Activated CD4-positive, alpha-beta T cell treated with anti-CD3 and anti-CD28 coated beads, Interleukin-2, amount 10 ng/mL, durations not matched to agents 24 days and 14 days (primary cell): ENCODE measurements at regions of chr16 and their contacts with region 1.

Region 1: DNA sequence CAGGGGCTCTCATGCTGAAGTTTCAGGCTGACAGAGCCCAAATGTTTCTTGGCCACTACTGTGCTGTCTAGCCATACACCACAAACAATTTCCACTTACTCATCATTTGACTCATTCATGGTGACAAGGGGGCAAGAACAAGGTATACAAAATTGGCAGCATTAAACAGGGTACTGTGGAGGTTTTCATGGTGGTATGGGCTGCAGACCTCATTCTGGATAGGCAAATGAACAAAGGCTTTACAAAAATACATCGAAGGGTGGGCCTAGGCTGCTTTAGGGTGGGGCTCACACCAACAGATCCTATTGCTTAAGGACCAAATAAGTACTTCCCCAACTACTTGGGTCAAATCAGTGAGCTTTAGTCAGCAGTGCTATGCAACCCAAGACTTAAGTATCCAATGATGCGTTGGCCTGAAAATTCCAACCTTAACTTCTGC is 53.0 kb downstream of the N4BP1 start:
- DNase-seq: peak; percentile 72
- H3K4me3 Mint-ChIP-seq: peak overlapping the region; percentile 55
- H3K27ac Mint-ChIP-seq: peak overlapping the region; percentile 86
- H3K4me1 Mint-ChIP-seq: peaks cover 72% of the 10 kb centered on the region
- H3K27me3 Mint-ChIP-seq: no peaks in the 10 kb centered on the region

Region 2: GRCh38 chr16:46822270-46822669 is 1734.7 kb before region 1 on chr16:
- intact Hi-C with region 1: loop called (anchors 5 kb)
- DNase-seq: peak; percentile 65
- H3K4me3 Mint-ChIP-seq: no peak overlapping the region
- H3K27ac Mint-ChIP-seq: no peak overlapping the region
- H3K4me1 Mint-ChIP-seq: peaks cover 26% of the 10 kb centered on the region
- H3K27me3 Mint-ChIP-seq: no peaks in the 10 kb centered on the region

Region 3: GRCh38 chr16:48459167-48459566 is 97.8 kb before region 1 on chr16:
- intact Hi-C with region 1: loop called (anchors 5 kb)
- DNase-seq: no peak
- H3K4me3 Mint-ChIP-seq: no peak overlapping the region
- H3K27ac Mint-ChIP-seq: peak overlapping the region; percentile 22
- H3K4me1 Mint-ChIP-seq: peaks cover 12% of the 10 kb centered on the region
- H3K27me3 Mint-ChIP-seq: peaks cover 24% of the 10 kb centered on the region

Region 4: DNA sequence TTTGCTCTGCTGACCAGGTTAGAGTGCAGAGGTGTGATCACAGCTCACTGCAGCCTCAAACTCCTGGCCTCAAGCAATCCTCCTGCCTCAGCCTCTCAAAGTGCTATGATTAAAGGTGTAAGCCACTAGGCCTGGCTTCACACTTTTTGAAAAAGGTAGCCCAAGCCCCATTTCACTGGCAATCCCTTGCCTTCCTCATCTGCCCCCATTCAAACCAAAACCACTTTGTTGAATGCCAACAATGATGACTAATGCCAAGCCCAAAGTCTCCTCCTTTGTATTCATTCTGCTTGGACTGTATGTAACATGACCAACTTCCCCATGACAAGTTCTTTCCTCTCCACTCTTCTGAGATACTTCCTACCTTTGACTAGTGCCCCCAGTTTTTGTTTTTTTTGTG is 20.0 kb after region 1 on chr16:
- intact Hi-C with region 1: loop called (anchors 2 kb)
- DNase-seq: no peak
- H3K4me3 Mint-ChIP-seq: peak overlapping the region; percentile 16
- H3K27ac Mint-ChIP-seq: peak overlapping the region; percentile 81
- H3K4me1 Mint-ChIP-seq: peaks cover 39% of the 10 kb centered on the region
- H3K27me3 Mint-ChIP-seq: no peaks in the 10 kb centered on the region

Region 5: DNA sequence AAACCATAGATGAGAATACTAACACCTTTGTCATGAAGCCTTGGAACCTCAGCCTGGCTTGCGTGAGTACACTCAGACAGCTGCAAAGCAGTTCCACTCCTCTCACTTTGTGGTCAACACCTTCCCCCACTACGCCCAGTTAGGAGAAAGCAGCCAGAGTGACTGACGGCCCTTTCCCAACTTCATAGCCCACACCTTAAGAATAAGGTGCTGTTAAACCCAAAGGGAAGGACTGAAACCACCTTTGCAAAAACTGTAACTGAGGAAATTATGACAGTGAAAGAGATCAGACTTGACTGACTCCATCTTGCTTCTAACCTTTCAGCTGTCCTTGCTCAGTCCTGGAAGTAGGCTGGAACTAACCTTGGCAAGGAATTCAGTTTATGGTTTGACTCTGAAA is 39.4 kb after region 1 on chr16:
- intact Hi-C with region 1: loop called (anchors 1 kb)
- DNase-seq: peak; percentile 77
- H3K4me3 Mint-ChIP-seq: peak overlapping the region; percentile 54
- H3K27ac Mint-ChIP-seq: peak overlapping the region; percentile 88
- H3K4me1 Mint-ChIP-seq: peaks cover 40% of the 10 kb centered on the region
- H3K27me3 Mint-ChIP-seq: no peaks in the 10 kb centered on the region

Region 6: GRCh38 chr16:49127103-49127502 is 570.2 kb after region 1 on chr16:
- intact Hi-C with region 1: no loop called
- DNase-seq: no peak
- H3K4me3 Mint-ChIP-seq: no peak overlapping the region
- H3K27ac Mint-ChIP-seq: no peak overlapping the region
- H3K4me1 Mint-ChIP-seq: no peaks in the 10 kb centered on the region
- H3K27me3 Mint-ChIP-seq: no peaks in the 10 kb centered on the region